Adrenal gland (tissue), 19 donors: ENCODE measurements at regions of chr7 and their contacts with region 1.

Region 1: DNA sequence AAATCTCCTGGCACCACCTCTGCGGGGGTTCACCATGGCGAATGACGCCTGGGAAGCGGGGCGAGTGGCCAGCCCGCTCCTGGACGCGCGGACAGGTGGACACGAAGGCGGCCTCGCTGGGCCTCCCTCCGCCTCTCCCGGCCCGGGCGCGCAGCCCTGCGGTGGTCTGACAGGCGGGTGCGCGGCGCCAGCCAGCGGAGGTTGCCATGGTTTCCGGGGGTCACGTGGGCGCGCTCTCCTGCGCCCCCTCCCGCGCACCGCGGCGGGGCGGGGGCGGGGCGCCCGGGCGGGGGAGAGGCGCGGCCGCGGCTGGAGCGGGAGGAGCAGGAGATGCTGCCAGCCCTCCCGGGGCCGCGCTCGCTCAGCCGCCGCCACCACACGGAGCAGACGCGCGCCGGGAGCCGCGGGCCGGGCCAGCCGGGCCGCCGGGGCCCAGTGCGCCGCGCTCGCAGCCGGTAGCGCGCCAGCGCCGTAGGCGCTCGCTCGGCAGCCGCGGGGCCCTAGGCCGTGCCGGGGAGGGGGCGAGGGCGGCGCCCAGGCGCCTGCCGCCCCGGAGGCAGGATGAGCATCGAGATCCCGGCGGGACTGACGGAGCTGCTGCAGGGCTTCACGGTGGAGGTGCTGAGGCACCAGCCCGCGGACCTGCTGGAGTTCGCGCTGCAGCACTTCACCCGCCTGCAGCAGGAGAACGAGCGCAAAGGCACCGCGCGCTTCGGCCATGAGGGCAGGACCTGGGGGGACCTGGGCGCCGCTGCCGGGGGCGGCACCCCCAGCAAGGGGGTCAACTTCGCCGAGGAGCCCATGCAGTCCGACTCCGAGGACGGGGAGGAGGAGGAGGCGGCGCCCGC is at the start of gene PRKAR2B:
- DNase-seq: peak; percentile 80 to 90 (median 87)
- H3K4me3 ChIP-seq: peak within 1 kb of the TSS; percentile 49 to 81 (median 67)
- H3K27ac ChIP-seq: peak within 1 kb of the TSS in 4 of 5 donors; percentile 57 to 90 (median 74)
- H3K4me1 ChIP-seq: peaks cover 15 to 37% of the 10 kb centered on the region in 2 donors
- H3K27me3 ChIP-seq: no peaks in the 10 kb centered on the region
- CTCF ChIP-seq: peak in 2 of 6 experiments; percentile 14 to 25
- POLR2A ChIP-seq: peak; percentile 64 to 80
- total RNA-seq, gene PRKAR2B: 58.2 to 145 (median 87.9) TPM

Region 2: DNA sequence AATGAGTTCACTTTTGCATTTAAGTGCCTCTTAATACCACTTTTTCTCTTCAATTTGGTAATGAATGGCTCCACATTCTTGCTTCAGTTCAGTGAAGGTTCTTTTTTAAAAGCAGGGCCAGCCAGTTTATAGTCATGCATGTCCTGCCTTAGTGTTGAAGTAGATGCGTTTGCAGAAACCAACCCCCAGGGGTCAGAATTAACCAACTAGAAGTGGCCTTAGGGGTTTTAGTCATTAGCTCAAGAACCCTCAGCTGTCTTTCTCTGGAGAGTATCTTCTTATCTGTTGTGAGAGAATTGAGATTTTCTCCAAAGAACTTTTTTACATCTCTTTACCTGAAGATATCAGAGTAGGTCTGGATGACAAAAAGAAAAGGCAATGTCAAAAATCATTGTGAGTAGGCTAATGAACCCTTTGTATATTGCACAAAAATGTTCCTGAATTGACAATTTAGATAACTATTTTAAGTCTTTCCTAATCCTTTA is 97.3 kb before region 1 on chr7:
- intact Hi-C with region 1: loop called in 1 of 2 experiments (anchors 5 kb)
- DNase-seq: peak; percentile 66 to 91 (median 69)
- H3K4me3 ChIP-seq: no peak overlapping the region
- H3K27ac ChIP-seq: no peak overlapping the region
- H3K4me1 ChIP-seq: peaks cover 0 to 1% of the 10 kb centered on the region in 2 donors
- H3K27me3 ChIP-seq: no peaks in the 10 kb centered on the region
- CTCF ChIP-seq: peak; percentile 51 to 89 (median 78)
- POLR2A ChIP-seq: no peak